CD8-positive, alpha-beta memory T cell (primary cell): ENCODE measurements at regions of chr5 and their contacts with region 1.

Region 1: DNA sequence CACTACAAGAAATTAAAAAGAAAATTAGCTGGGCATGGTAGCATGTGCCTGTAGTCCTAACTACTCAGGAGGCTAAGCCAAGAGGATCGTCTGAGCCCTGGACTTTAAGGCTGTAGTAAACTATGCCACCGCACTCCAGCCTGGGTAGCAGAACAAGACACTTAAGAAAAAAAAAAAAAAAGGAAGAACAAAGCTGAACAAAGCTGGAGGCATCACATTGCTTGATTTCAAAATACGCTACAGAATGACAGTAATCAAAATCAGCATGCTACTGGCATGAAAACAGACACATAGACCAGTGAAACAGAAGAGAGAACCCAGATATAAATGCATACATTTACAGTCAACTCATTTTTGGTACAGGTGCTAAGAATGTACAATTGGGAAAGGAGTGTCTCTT is 14.5 kb upstream of the OTULIN start:
- DNase-seq: no peak
- H3K4me3 ChIP-seq: no peak overlapping the region
- H3K4me3 Mint-ChIP-seq: no peak overlapping the region
- H3K27ac ChIP-seq: no peak overlapping the region
- H3K27ac Mint-ChIP-seq: peak overlapping the region in 1 of 8 donors; percentile 7
- H3K4me1 ChIP-seq: no peaks in the 10 kb centered on the region
- H3K4me1 Mint-ChIP-seq: peaks cover 2 to 6% (median 2%) of the 10 kb centered on the region in 3 donors
- H3K27me3 ChIP-seq: no peaks in the 10 kb centered on the region
- H3K27me3 Mint-ChIP-seq: peaks cover 7 to 21% of the 10 kb centered on the region in 2 donors

Region 2: DNA sequence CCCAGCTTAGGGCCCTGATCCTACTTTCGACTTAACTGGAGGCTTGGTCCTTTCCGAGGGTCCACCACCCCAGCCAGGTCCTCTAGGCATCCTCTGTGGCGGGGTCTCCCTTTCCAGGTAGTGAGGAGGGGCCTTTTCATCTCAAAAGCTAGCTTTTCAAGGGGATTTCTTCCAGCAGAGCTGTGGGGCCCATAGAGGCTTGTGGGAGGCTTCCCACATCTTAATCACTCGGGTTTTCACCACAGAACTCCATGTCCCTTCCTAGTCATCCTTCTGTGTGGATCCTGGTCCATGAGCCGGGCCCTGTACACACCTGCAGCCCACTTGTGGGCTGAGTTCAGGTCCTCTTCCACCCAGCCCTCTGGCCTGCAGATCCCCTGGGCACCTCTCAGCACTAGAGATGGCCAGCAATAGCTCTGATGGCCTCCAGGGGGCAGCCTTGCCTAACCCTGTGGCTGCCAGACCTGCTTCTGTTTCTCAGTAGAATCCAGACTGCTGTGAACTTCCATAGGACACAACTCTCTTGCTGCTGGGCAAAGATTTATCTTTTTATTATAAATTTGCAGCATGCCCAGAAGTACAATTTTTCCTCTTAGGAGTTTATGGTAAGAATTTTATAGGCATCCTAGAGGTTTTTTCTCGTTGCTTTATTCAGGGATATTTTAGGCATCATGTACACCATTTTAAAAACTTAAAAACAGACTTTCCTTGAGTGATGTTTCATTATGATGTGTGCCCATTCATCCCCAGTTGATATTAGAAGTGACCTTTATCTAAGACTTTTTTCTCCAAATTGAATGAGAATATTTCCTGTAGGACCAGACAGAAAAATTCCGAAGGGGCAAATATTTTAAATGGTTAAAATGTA is 298.0 kb before region 1 on chr5:
- CTCF ChIA-PET with region 1: interaction called, 27 read pairs
- POLR2A ChIA-PET with region 1: no interaction called
- DNase-seq: peak; percentile 28 to 68 (median 45)
- H3K4me3 ChIP-seq: no peak overlapping the region
- H3K4me3 Mint-ChIP-seq: no peak overlapping the region
- H3K27ac ChIP-seq: no peak overlapping the region
- H3K27ac Mint-ChIP-seq: no peak overlapping the region
- H3K4me1 ChIP-seq: no peaks in the 10 kb centered on the region
- H3K4me1 Mint-ChIP-seq: peaks cover 0 to 7% (median 0%) of the 10 kb centered on the region in 3 donors
- H3K27me3 ChIP-seq: no peaks in the 10 kb centered on the region
- H3K27me3 Mint-ChIP-seq: peaks cover 0 to 10% of the 10 kb centered on the region in 2 donors

Region 3: GRCh38 chr5:14399054-14399692 is 250.9 kb before region 1 on chr5:
- CTCF ChIA-PET with region 1: interaction called, 69 read pairs
- POLR2A ChIA-PET with region 1: no interaction called
- DNase-seq: peak in 2 of 5 donors; percentile 6 to 48
- H3K4me3 ChIP-seq: no peak overlapping the region
- H3K4me3 Mint-ChIP-seq: no peak overlapping the region
- H3K27ac ChIP-seq: no peak overlapping the region
- H3K27ac Mint-ChIP-seq: no peak overlapping the region
- H3K4me1 ChIP-seq: no peaks in the 10 kb centered on the region
- H3K4me1 Mint-ChIP-seq: peaks cover 2 to 25% (median 18%) of the 10 kb centered on the region in 3 donors
- H3K27me3 ChIP-seq: no peaks in the 10 kb centered on the region
- H3K27me3 Mint-ChIP-seq: peaks cover 0 to 6% of the 10 kb centered on the region in 2 donors

Region 4: DNA sequence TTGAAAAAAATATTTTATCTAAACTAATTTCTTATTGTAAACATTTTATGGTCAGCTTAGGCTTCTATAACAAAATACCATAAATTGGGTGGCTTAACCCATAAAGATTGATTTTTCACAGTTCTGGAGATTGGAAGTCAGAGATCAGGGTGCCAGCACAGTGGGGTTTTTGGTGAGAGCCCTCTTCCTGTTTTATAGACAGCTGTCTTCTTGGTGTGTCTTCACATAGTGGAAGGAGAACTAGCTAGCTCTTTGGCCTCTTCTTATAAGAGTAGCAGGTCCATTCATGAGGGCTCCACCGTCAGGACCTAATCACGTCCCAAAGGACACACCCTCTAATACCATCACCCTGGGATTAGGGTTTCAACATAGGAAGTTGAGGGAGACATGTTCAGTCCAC is 41.9 kb before region 1 on chr5:
- CTCF ChIA-PET with region 1: no interaction called
- POLR2A ChIA-PET with region 1: no interaction called
- DNase-seq: no peak
- H3K4me3 ChIP-seq: no peak overlapping the region
- H3K4me3 Mint-ChIP-seq: no peak overlapping the region
- H3K27ac ChIP-seq: no peak overlapping the region
- H3K27ac Mint-ChIP-seq: peak overlapping the region in 3 of 8 donors; percentile 22 to 41 (median 34)
- H3K4me1 ChIP-seq: no peaks in the 10 kb centered on the region
- H3K4me1 Mint-ChIP-seq: peaks cover 0 to 4% (median 1%) of the 10 kb centered on the region in 3 donors
- H3K27me3 ChIP-seq: no peaks in the 10 kb centered on the region
- H3K27me3 Mint-ChIP-seq: no peaks in the 10 kb centered on the region

Region 5: DNA sequence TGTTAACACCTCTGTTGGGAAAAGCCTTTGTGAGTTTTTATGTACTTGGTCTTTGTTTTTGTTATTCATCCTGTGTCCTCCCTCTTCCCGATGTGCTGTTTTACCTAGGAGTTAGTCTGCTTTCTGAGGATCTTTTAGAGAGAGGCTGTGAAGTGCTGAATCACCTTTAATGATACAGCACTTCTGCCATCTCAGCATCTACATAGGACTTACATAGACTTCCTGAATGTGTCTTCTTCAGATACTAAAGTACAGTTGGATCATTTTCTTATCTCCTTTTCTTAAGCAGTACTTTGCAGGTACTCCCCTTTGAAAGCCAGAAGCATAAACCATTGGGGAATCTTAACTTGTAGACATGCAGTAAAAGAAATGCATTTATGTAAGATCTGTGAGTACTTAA is 46.0 kb after region 1 on chr5:
- CTCF ChIA-PET with region 1: no interaction called
- POLR2A ChIA-PET with region 1: no interaction called
- DNase-seq: no peak
- H3K4me3 ChIP-seq: no peak overlapping the region
- H3K4me3 Mint-ChIP-seq: no peak overlapping the region
- H3K27ac ChIP-seq: no peak overlapping the region
- H3K27ac Mint-ChIP-seq: peak overlapping the region in 6 of 8 donors; percentile 38 to 81 (median 56)
- H3K4me1 ChIP-seq: peaks cover 5% of the 10 kb centered on the region
- H3K4me1 Mint-ChIP-seq: peaks cover 20 to 71% (median 36%) of the 10 kb centered on the region in 3 donors
- H3K27me3 ChIP-seq: no peaks in the 10 kb centered on the region
- H3K27me3 Mint-ChIP-seq: no peaks in the 10 kb centered on the region

Region 6: GRCh38 chr5:14728459-14728938 is 78.4 kb after region 1 on chr5:
- CTCF ChIA-PET with region 1: no interaction called
- POLR2A ChIA-PET with region 1: no interaction called
- DNase-seq: no peak
- H3K4me3 ChIP-seq: no peak overlapping the region
- H3K4me3 Mint-ChIP-seq: no peak overlapping the region
- H3K27ac ChIP-seq: no peak overlapping the region
- H3K27ac Mint-ChIP-seq: no peak overlapping the region
- H3K4me1 ChIP-seq: no peaks in the 10 kb centered on the region
- H3K4me1 Mint-ChIP-seq: peaks cover 4 to 13% (median 5%) of the 10 kb centered on the region in 3 donors
- H3K27me3 ChIP-seq: no peaks in the 10 kb centered on the region
- H3K27me3 Mint-ChIP-seq: no peaks in the 10 kb centered on the region